ENCODE measurements at regions of chr5 and their contacts with region 1.

Region 1: GRCh38 chr5:129904102-129904666 is at the start of gene CHSY3:
- DNase-seq: peak; percentile 93
- H3K4me3 Mint-ChIP-seq: peak within 1 kb of the TSS; percentile 84
- H3K27ac Mint-ChIP-seq: no peak within 1 kb of the TSS
- H3K4me1 Mint-ChIP-seq: peaks cover 24% of the 10 kb centered on the region
- H3K27me3 Mint-ChIP-seq: peaks cover 27% of the 10 kb centered on the region
- CTCF ChIP-seq: no peak
- total RNA-seq, gene CHSY3: 0.82 and 1.2 TPM in 2 replicates

Region 2: GRCh38 chr5:129844764-129845163 is 59.4 kb before region 1 on chr5:
- CTCF ChIA-PET with region 1: no interaction called
- POLR2A ChIA-PET with region 1: no interaction called
- intact Hi-C with region 1: no loop called
- DNase-seq: no peak
- H3K4me3 Mint-ChIP-seq: no peak overlapping the region
- H3K27ac Mint-ChIP-seq: no peak overlapping the region
- H3K4me1 Mint-ChIP-seq: no peaks in the 10 kb centered on the region
- H3K27me3 Mint-ChIP-seq: peaks cover 25% of the 10 kb centered on the region
- CTCF ChIP-seq: no peak

Region 3: GRCh38 chr5:130034566-130035210 is 130.5 kb after region 1 on chr5:
- CTCF ChIA-PET with region 1: no interaction called
- POLR2A ChIA-PET with region 1: no interaction called
- intact Hi-C with region 1: no loop called
- DNase-seq: peak; percentile 40
- H3K4me3 Mint-ChIP-seq: no peak overlapping the region
- H3K27ac Mint-ChIP-seq: no peak overlapping the region
- H3K4me1 Mint-ChIP-seq: peaks cover 8% of the 10 kb centered on the region
- H3K27me3 Mint-ChIP-seq: no peaks in the 10 kb centered on the region
- CTCF ChIP-seq: no peak

Region 4: GRCh38 chr5:130141659-130142320 is 237.6 kb after region 1 on chr5:
- CTCF ChIA-PET with region 1: interaction called, 3 read pairs
- POLR2A ChIA-PET with region 1: no interaction called
- intact Hi-C with region 1: loop called (anchors 1 kb)
- DNase-seq: peak; percentile 60
- H3K4me3 Mint-ChIP-seq: no peak overlapping the region
- H3K27ac Mint-ChIP-seq: no peak overlapping the region
- H3K4me1 Mint-ChIP-seq: peaks cover 19% of the 10 kb centered on the region
- H3K27me3 Mint-ChIP-seq: no peaks in the 10 kb centered on the region
- CTCF ChIP-seq: peak; percentile 47

Region 5: GRCh38 chr5:130720355-130720754 is 816.2 kb after region 1 on chr5:
- CTCF ChIA-PET with region 1: interaction called, 3 read pairs
- POLR2A ChIA-PET with region 1: no interaction called
- intact Hi-C with region 1: loop called (anchors 2 kb)
- DNase-seq: peak; percentile 88
- H3K4me3 Mint-ChIP-seq: no peak overlapping the region
- H3K27ac Mint-ChIP-seq: no peak overlapping the region
- H3K4me1 Mint-ChIP-seq: no peaks in the 10 kb centered on the region
- H3K27me3 Mint-ChIP-seq: no peaks in the 10 kb centered on the region
- CTCF ChIP-seq: peak; percentile 80

Region 6: DNA sequence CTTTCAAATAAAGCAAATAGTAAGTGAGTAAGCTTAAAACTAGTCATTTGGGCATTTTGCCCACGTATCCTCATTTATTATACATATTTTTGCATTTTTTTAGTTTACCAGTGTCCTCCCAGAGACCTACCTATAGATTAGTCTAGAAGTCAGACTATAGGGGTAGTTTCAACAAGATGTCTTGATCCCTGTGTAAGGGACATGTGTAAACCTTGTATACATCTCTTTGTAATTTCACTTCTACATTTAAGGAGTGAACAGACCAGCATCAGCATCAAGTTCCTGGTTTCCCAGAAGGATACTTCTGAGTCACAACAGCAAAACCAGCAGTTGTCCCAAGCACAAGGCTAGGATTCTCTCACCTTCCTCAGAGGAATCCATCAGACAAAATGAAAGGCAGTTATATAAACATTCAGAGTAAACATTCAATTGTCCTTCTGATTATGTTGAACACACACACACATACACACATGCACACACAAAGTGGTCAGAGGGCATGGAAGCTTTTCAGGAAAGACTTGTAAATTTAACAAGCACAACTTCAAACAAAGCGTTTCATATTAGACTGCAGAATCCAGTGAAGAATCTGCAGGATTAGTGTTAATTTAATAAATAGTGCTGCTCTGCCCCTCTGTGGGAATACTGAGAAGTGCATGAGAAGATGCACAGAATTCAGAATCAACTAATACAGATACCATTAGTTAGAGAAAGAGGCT is 1205.5 kb after region 1 on chr5:
- CTCF ChIA-PET with region 1: interaction called, 7 read pairs
- POLR2A ChIA-PET with region 1: no interaction called
- intact Hi-C with region 1: loop called (anchors 1 kb)
- DNase-seq: peak; percentile 74
- H3K4me3 Mint-ChIP-seq: no peak overlapping the region
- H3K27ac Mint-ChIP-seq: no peak overlapping the region
- H3K4me1 Mint-ChIP-seq: peaks cover 5% of the 10 kb centered on the region
- H3K27me3 Mint-ChIP-seq: no peaks in the 10 kb centered on the region
- CTCF ChIP-seq: peak; percentile 89

Measured in MCF 10A (cell line).